Naive thymus-derived CD4-positive, alpha-beta T cell (primary cell): ENCODE measurements at regions of chr1 and their contacts with region 1.

Region 1: DNA sequence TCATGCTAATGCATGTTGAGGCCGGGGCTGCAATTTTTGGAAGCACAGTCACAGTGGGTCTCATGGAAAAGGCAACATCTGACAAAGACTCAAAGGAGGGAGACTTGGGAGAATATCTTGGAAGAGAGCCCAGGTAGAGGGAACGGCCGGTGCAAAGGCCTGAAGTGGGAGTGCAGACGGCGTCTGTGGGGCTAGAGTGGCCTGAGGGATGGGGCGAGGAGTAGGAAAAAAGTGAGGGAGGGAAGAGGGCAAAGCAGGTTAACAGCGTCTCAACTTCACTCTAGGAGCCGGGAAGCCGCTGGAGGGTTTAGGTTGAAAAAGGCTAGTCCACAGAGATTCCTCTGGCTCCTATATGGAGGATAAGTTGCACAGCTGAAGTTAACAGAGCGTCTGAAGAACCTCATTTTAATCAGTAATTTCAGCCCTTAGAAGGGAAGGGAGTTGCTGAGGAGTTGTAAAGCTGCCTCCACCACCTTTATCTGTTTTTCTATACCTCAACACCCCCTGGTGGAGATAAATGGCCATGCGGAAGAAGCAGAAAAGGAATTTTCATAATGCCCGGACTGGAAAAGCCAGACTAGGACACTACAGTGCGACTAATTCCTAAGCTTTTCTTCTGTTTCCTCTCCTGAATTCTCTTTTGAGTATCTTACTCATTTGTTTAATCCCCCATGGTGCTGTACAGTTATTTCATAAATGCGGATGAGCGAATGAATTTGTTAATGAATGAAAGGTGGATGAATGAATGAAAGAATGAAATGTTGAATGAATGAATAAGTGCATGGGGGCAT is 78.7 kb upstream of the ZNF281 start:
- DNase-seq: peak in 8 of 9 donors; percentile 38 to 61 (median 56)
- ATAC-seq: peak; percentile 67
- H3K4me3 ChIP-seq: no peak overlapping the region
- H3K4me3 Mint-ChIP-seq: no peak overlapping the region
- H3K27ac ChIP-seq: no peak overlapping the region
- H3K27ac Mint-ChIP-seq: peak overlapping the region in 1 of 9 donors; percentile 79
- H3K4me1 ChIP-seq: no peaks in the 10 kb centered on the region
- H3K4me1 Mint-ChIP-seq: peaks cover 0 to 14% (median 0%) of the 10 kb centered on the region in 7 donors
- H3K27me3 ChIP-seq: no peaks in the 10 kb centered on the region
- H3K27me3 Mint-ChIP-seq: peaks cover 0 to 29% (median 11%) of the 10 kb centered on the region in 5 donors

Region 2: DNA sequence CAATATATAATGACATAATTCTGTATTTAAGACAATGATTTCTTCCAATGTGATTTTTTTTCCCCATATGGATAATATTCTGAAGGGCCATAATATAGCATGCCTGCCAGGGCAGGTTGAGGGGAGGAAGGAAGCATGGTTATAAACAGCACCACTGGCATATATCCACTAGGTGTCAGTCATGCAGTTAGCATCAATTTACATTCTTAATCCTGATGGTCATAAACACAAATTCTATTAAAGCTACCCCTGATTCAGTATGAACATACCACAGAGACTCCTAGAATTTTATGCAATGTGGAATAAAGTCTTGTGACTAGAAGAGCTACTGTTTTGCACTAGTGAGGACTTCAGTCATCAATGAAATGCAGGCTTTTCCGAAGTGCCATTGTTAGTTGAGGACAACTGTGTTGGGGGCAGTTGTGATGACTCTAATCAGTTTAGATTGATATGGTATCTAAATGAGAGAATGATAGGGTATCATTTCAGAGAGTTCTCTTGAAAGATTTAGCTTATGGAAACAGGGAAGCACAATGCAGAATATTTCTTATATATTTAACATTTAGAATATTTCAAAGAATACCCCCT is 803.8 kb before region 1 on chr1:
- CTCF ChIA-PET with region 1: interaction called, 9 read pairs
- POLR2A ChIA-PET with region 1: no interaction called
- intact Hi-C with region 1: loop called (anchors 1 kb)
- DNase-seq: peak in 7 of 9 donors; percentile 7 to 38 (median 28)
- ATAC-seq: peak; percentile 85
- H3K4me3 ChIP-seq: no peak overlapping the region
- H3K4me3 Mint-ChIP-seq: no peak overlapping the region
- H3K27ac ChIP-seq: no peak overlapping the region
- H3K27ac Mint-ChIP-seq: no peak overlapping the region
- H3K4me1 ChIP-seq: no peaks in the 10 kb centered on the region
- H3K4me1 Mint-ChIP-seq: no peaks in the 10 kb centered on the region
- H3K27me3 ChIP-seq: no peaks in the 10 kb centered on the region
- H3K27me3 Mint-ChIP-seq: peaks cover 7 to 33% (median 8%) of the 10 kb centered on the region in 5 donors

Region 3: DNA sequence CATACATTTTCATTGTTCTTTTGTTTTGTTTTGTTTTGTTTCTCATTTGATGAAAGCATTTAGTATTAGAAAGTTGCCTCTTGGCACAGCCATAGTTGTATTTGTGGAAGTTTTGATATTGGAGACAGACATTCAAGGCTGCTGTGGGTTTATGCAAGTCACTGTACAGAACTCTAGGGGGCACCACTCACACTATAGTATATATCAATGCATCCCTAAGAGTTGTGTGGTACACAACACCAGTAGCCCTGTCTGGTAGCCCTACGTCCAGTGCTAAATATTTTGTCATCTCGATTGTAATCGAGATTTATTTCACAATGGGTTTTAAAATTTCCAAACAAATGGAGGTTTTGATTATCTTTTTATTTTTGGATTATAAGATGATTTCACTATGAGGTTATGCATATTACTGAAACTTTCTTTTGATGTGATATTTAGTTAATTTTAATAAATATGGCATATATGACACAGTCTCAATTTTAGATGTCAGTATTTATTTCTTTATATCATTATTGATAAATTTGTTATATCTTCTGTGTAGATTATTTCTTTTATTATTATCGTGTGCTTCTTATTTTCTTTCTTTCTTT is 348.8 kb before region 1 on chr1:
- CTCF ChIA-PET with region 1: interaction called, 5 read pairs
- POLR2A ChIA-PET with region 1: no interaction called
- intact Hi-C with region 1: loop called (anchors 1 kb)
- DNase-seq: peak in 7 of 9 donors; percentile 5 to 56 (median 23)
- ATAC-seq: peak; percentile 93
- H3K4me3 ChIP-seq: no peak overlapping the region
- H3K4me3 Mint-ChIP-seq: no peak overlapping the region
- H3K27ac ChIP-seq: no peak overlapping the region
- H3K27ac Mint-ChIP-seq: no peak overlapping the region
- H3K4me1 ChIP-seq: no peaks in the 10 kb centered on the region
- H3K4me1 Mint-ChIP-seq: peaks cover 0 to 8% (median 0%) of the 10 kb centered on the region in 7 donors
- H3K27me3 ChIP-seq: no peaks in the 10 kb centered on the region
- H3K27me3 Mint-ChIP-seq: peaks cover 0 to 12% (median 0%) of the 10 kb centered on the region in 5 donors

Region 4: DNA sequence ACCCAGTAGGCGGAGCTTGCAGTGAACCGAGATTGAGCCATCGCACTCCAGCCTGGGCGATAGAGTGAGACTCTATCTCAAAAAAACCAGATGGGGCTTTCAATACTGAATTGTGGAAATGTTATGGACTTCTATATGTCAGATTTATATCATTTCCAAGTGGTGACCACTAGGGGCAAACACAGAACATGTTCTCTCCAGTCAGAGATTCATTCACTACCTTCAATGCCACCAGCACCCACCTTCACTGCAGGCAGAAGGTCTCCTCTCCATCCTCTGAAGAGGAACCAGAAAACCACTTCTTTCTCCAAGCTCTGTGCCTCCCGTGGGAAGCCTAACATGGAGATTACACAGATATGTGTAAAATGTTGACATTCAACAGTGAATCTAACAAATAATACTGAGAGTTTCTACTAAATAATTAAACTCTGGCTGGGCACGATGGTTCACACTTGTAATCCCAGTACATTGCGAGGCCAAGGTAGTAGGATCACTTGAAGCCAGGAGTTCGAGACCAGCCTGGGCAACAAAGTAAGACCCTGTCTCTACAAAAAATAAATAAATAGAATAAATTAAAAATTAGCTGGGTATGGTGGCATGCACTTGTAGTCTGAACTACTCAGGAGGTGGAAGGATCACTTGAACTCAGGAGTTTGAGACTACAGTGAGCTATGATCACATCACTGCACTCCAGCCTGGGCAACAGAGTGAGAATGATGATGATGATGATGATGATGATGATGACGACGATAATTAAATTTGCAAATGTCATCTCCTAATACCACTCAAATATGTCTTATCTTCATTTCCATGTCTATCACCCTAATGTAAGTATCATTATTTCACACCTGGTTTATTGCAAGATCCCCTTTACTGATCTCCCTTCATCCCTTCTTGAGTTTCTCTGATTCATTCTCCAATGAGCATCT is 229.9 kb before region 1 on chr1:
- CTCF ChIA-PET with region 1: no interaction called
- POLR2A ChIA-PET with region 1: interaction called, 3 read pairs
- intact Hi-C with region 1: loop called in 1 of 2 experiments (anchors 1 kb)
- DNase-seq: peak in 5 of 9 donors; percentile 6 to 27 (median 9)
- ATAC-seq: peak; percentile 61
- H3K4me3 ChIP-seq: no peak overlapping the region
- H3K4me3 Mint-ChIP-seq: no peak overlapping the region
- H3K27ac ChIP-seq: no peak overlapping the region
- H3K27ac Mint-ChIP-seq: no peak overlapping the region
- H3K4me1 ChIP-seq: no peaks in the 10 kb centered on the region
- H3K4me1 Mint-ChIP-seq: peaks cover 0 to 13% (median 0%) of the 10 kb centered on the region in 7 donors
- H3K27me3 ChIP-seq: no peaks in the 10 kb centered on the region
- H3K27me3 Mint-ChIP-seq: peaks cover 0 to 10% (median 0%) of the 10 kb centered on the region in 5 donors

Region 5: GRCh38 chr1:200302192-200302920 is 186.2 kb before region 1 on chr1:
- CTCF ChIA-PET with region 1: interaction called, 3 read pairs
- POLR2A ChIA-PET with region 1: no interaction called
- intact Hi-C with region 1: loop called (anchors 1 kb)
- DNase-seq: peak; percentile 57 to 81 (median 74)
- ATAC-seq: peak; percentile 97
- H3K4me3 ChIP-seq: peak overlapping the region; percentile 95
- H3K4me3 Mint-ChIP-seq: peak overlapping the region; percentile 84 to 95 (median 94)
- H3K27ac ChIP-seq: peak overlapping the region; percentile 74
- H3K27ac Mint-ChIP-seq: peak overlapping the region; percentile 59 to 97 (median 93)
- H3K4me1 ChIP-seq: peaks cover 12 to 15% of the 10 kb centered on the region in 2 donors
- H3K4me1 Mint-ChIP-seq: peaks cover 4 to 42% (median 22%) of the 10 kb centered on the region in 7 donors
- H3K27me3 ChIP-seq: no peaks in the 10 kb centered on the region
- H3K27me3 Mint-ChIP-seq: peaks cover 0 to 37% (median 0%) of the 10 kb centered on the region in 5 donors

Region 6: DNA sequence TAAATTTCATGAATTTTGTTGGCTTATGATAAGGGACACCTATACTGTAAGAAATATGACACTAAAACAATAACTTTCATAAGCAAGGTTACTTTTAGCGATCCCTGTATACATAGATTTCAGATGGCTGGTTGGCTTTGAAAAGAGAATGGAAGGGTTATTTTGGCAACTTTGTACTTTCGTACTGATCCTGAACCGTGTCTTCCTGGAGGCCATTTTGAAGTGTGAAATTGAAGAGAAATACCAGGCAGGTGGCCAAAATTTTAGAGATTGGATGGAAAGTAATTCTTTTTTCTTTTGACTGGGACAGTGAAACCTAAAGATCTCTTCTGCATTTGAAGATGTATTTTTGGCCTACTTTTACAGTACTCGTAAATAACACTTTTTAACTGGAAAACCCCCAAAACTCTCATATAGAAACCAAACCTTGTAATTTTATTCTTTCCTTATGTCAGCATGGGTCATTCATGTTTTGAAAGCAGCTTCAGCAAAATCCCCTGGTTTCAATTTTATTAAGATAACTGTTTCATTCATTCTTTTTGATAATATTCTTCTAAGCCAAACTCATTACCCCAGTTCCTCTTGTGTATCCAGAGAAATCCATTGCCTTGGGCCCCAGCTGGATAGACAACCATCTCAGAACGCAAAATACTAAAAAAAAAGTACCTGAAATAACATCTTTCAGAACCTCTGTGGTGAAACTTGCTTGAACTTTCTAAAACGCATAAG is 40.4 kb before region 1 on chr1:
- CTCF ChIA-PET with region 1: no interaction called
- POLR2A ChIA-PET with region 1: no interaction called
- intact Hi-C with region 1: loop called in 1 of 2 experiments (anchors 1 kb)
- DNase-seq: no peak
- ATAC-seq: no peak
- H3K4me3 ChIP-seq: no peak overlapping the region
- H3K4me3 Mint-ChIP-seq: peak overlapping the region in 1 of 10 donors; percentile 18
- H3K27ac ChIP-seq: no peak overlapping the region
- H3K27ac Mint-ChIP-seq: peak overlapping the region in 1 of 9 donors; percentile 79
- H3K4me1 ChIP-seq: no peaks in the 10 kb centered on the region
- H3K4me1 Mint-ChIP-seq: peaks cover 0 to 12% (median 0%) of the 10 kb centered on the region in 7 donors
- H3K27me3 ChIP-seq: no peaks in the 10 kb centered on the region
- H3K27me3 Mint-ChIP-seq: no peaks in the 10 kb centered on the region

Region 7: DNA sequence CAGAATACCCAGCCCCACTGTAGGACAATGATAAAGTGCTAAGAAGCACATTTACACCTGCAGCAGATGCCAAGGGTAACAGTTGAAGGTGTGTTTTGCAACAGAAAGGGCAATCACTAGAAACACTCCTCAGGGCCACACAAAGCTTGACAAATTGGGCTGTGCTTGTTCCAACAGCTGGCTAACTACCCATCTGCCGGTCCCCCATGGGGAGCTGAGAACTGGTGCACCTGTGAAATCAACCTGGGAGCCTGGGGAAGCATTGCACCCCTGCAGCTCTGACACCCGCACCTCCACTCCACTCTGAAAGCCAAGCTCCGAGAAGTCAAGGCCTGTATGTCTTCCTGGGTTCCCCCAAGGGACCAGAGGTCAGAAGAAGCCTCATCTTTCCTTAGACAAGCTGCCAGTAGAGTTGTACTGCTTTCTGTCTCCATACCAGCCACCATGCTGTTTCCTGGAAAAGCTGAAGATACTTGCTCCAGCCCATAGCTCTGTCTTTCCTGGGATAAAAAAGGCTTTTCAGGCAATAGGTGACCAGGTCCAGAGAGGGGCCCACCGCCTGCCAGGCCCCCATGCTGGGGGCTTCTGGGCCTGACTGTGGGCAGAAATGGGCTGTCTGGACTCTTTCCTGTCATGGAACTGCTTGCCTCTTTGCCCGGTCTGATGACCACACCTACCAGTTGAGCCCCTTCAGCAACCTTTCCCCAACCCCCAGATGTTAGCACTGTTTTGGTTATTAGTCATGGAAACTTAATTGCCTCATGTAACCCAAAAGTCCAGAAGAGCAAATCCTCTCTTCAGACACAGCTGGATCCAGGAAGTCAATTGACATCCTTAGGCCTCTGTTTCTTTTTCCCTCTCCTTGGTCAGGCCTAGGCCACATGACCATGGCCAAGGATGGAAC is 38.4 kb after region 1 on chr1:
- CTCF ChIA-PET with region 1: no interaction called
- POLR2A ChIA-PET with region 1: no interaction called
- intact Hi-C with region 1: no loop called
- DNase-seq: no peak
- ATAC-seq: no peak
- H3K4me3 ChIP-seq: no peak overlapping the region
- H3K4me3 Mint-ChIP-seq: no peak overlapping the region
- H3K27ac ChIP-seq: no peak overlapping the region
- H3K27ac Mint-ChIP-seq: peak overlapping the region in 1 of 9 donors; percentile 85
- H3K4me1 ChIP-seq: peaks cover 16 to 31% of the 10 kb centered on the region in 2 donors
- H3K4me1 Mint-ChIP-seq: peaks cover 16 to 52% (median 40%) of the 10 kb centered on the region in 7 donors
- H3K27me3 ChIP-seq: no peaks in the 10 kb centered on the region
- H3K27me3 Mint-ChIP-seq: no peaks in the 10 kb centered on the region

Region 8: DNA sequence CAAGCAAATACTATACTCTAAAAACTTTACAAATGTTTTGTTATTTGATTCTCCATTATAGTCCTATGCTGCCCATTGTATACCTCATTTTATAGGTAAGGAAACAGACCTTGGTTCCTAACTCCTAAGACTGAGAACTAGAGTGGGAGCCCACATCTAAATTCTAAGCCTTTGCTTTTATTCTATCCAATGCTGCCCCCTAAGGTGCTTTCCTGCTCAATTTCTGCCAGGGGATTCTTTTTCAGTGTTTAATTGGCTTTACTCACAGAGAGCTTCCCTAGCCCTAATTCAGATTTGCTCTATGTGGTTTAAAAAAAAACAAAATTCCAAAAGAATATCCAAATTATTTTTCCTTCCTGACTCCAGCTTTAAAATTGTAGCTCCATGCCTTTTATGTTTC is 67.4 kb after region 1 on chr1:
- CTCF ChIA-PET with region 1: no interaction called
- POLR2A ChIA-PET with region 1: no interaction called
- intact Hi-C with region 1: no loop called
- DNase-seq: peak in 3 of 9 donors; percentile 8 to 21 (median 12)
- ATAC-seq: no peak
- H3K4me3 ChIP-seq: no peak overlapping the region
- H3K4me3 Mint-ChIP-seq: no peak overlapping the region
- H3K27ac ChIP-seq: no peak overlapping the region
- H3K27ac Mint-ChIP-seq: no peak overlapping the region
- H3K4me1 ChIP-seq: no peaks in the 10 kb centered on the region
- H3K4me1 Mint-ChIP-seq: peaks cover 0 to 3% (median 0%) of the 10 kb centered on the region in 7 donors
- H3K27me3 ChIP-seq: no peaks in the 10 kb centered on the region
- H3K27me3 Mint-ChIP-seq: no peaks in the 10 kb centered on the region

Region 9: DNA sequence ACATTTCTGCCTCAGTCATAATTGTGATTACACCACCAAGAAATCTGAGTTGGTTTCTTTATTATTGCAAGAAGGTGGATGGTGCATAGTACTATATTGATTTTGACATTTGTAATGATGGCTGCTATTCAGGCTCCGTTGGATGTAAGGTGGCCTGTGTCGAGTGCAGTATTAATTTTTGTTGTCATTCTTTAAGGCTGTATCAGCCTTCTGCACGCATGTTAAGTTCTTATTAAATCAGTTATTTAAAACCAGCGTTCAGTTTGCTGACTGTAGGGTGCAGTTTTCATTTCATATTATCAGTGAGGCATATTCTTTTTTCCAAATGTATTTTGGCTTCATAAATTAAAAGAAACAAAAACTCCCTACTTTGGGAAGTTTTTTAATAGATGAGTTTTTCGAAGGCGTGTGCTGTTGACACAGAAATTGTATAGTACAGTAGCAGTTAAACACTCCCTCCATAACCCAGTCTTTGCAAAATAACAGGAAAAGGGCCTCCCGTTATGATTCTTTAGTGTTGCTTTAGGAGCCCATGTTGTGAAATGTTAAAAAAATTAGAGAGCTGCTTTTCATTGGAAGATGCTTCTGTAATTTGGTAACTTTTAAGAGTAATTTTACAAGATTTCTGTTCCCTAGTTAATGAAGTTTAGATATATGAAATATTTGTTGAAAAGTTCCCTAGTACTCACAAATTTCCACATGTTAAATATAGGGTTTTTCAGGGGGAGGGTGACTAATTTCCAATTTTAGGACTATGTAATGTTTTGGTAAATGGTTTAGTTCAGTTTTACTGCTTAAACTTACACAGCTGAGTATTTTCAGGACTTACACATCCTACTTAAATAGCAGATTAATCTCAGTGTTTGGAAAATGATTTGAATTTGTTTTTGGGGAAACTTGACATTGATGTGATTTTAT is 252.0 kb after region 1 on chr1:
- CTCF ChIA-PET with region 1: no interaction called
- POLR2A ChIA-PET with region 1: no interaction called
- intact Hi-C with region 1: no loop called
- DNase-seq: peak in 3 of 9 donors; percentile 3 to 22 (median 19)
- ATAC-seq: no peak
- H3K4me3 ChIP-seq: peak overlapping the region; percentile 74
- H3K4me3 Mint-ChIP-seq: peak overlapping the region; percentile 64 to 99 (median 88)
- H3K27ac ChIP-seq: peak overlapping the region; percentile 75
- H3K27ac Mint-ChIP-seq: peak overlapping the region in 8 of 9 donors; percentile 33 to 92 (median 83)
- H3K4me1 ChIP-seq: peaks cover 5 to 23% of the 10 kb centered on the region in 2 donors
- H3K4me1 Mint-ChIP-seq: peaks cover 23 to 59% (median 49%) of the 10 kb centered on the region in 7 donors
- H3K27me3 ChIP-seq: no peaks in the 10 kb centered on the region
- H3K27me3 Mint-ChIP-seq: peaks cover 0 to 51% (median 0%) of the 10 kb centered on the region in 5 donors

Region 10: GRCh38 chr1:200751717-200752116 is 263.1 kb after region 1 on chr1:
- CTCF ChIA-PET with region 1: no interaction called
- POLR2A ChIA-PET with region 1: no interaction called
- intact Hi-C with region 1: no loop called
- DNase-seq: no peak
- ATAC-seq: no peak
- H3K4me3 ChIP-seq: no peak overlapping the region
- H3K4me3 Mint-ChIP-seq: no peak overlapping the region
- H3K27ac ChIP-seq: no peak overlapping the region
- H3K27ac Mint-ChIP-seq: no peak overlapping the region
- H3K4me1 ChIP-seq: no peaks in the 10 kb centered on the region
- H3K4me1 Mint-ChIP-seq: peaks cover 4 to 18% (median 12%) of the 10 kb centered on the region in 7 donors
- H3K27me3 ChIP-seq: no peaks in the 10 kb centered on the region
- H3K27me3 Mint-ChIP-seq: no peaks in the 10 kb centered on the region